ENCODE measurements at regions of chr20 and their contacts with region 1.

Region 1: DNA sequence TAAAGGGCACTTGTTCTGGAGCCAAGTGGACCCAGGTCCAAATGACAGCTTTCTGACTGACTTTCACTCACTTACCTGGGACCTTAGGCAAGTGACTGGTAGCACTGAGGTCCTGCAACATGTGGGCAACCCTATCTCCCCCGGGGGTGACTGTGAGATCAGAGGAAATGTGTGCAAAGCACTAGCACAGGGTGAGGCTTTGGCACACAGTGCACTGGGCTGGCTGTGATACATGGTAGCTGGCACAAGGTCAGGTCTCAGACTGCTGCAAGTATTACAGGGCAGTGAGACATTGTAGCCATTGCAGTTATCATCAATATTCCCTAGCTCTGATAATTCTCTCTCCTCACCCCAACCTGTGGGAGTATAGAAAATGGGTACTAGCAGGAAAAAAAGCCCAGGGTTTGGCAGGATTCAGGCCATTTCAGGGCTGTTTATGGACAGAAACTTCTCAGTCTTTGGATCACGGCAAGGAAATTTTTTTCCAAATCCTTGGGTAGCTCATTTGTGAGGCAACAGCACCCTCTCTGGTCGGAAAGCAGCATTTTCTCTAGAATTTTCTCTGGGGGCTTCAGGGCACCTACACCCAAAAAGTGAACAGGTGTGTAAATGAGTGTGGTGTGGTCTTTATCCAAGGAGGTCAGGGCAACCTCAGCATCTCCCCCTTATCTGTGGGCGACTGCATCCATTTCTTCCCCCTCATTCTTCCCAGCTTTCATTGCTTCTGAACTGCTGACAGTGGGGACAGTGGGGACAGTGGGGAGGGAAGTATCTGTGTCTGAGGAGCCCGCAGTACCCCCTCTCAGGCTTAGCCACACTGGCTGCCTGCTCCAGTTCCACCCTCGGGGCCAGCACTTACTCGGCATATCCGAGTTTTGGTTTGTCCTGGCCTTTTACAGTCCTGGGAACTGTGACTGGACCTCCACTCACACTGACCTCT is 148.7 kb upstream of the PHACTR3 start:
- DNase-seq: peak; percentile 34
- H3K4me3 Mint-ChIP-seq: no peak overlapping the region
- H3K27ac Mint-ChIP-seq: no peak overlapping the region
- H3K4me1 Mint-ChIP-seq: no peaks in the 10 kb centered on the region
- H3K27me3 Mint-ChIP-seq: peaks cover 61% of the 10 kb centered on the region
- CTCF ChIP-seq: peak; percentile 55

Region 2: GRCh38 chr20:58236612-58237330 is 1218.9 kb before region 1 on chr20:
- CTCF ChIA-PET with region 1: interaction called, 5 read pairs
- POLR2A ChIA-PET with region 1: no interaction called
- intact Hi-C with region 1: loop called (anchors 2 kb)
- DNase-seq: peak; percentile 71
- H3K4me3 Mint-ChIP-seq: peak overlapping the region; percentile 77
- H3K27ac Mint-ChIP-seq: no peak overlapping the region
- H3K4me1 Mint-ChIP-seq: no peaks in the 10 kb centered on the region
- H3K27me3 Mint-ChIP-seq: no peaks in the 10 kb centered on the region
- CTCF ChIP-seq: peak; percentile 96

Region 3: DNA sequence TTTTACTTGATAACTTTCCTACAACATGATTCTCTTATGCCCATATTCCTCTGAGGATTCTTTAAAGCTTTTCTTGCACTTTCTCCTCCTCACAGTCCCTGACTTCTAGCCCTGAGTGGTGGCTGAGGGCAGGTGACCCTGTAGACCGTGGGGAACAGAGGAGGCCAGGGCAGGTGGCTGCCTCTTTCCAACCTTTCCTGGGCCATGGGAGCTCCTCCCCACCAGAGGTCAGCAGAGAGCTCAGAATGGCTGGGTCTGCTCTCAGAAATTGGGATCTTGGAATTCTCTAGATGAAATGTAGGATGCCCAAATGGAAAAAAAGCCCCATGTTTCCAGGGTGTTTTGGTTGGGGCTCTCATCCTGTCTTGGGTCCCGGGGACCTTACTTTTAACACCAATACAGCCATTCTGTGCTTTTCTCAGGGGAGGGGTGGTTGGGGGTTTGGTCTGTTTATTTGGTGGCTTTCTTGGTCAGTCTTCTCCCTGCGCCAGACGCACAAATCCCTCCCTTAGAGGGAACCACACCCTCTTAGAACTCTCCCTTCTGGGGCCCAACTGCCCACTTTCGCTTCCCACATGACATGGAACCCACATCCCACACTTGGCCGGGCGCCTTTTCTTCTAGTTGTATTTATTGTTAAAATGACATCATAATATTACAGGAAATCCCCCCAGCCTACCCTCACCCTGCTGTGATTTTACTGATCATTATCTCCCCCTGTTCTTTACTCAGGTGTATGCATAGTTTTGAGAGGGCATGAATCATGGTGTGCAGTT is 585.2 kb before region 1 on chr20:
- CTCF ChIA-PET with region 1: interaction called, 50 read pairs
- POLR2A ChIA-PET with region 1: interaction called, 5 read pairs
- intact Hi-C with region 1: no loop called
- DNase-seq: peak; percentile 75
- H3K4me3 Mint-ChIP-seq: no peak overlapping the region
- H3K27ac Mint-ChIP-seq: no peak overlapping the region
- H3K4me1 Mint-ChIP-seq: peaks cover 1% of the 10 kb centered on the region
- H3K27me3 Mint-ChIP-seq: peaks cover 26% of the 10 kb centered on the region
- CTCF ChIP-seq: peak; percentile 87

Region 4: DNA sequence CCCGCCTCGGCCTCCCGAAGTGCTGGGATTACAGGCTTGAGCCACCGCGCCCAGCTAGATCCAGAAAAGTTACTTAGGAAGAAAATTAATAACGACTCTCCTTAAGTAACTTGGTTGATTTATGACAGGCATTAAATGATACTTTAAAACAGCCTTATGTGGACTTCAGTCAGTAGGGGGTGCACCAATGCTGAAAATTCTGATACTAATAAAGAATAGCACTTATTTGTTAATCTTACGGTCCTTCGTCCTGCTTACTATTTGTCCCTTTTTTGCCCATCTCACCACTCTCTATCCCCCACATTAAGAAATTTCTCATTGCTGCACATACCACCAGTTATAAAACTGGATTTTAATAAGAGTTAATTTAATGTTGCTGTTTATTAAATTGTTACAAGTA is 400.4 kb before region 1 on chr20:
- CTCF ChIA-PET with region 1: interaction called, 15 read pairs
- POLR2A ChIA-PET with region 1: no interaction called
- intact Hi-C with region 1: no loop called
- DNase-seq: peak; percentile 39
- H3K4me3 Mint-ChIP-seq: no peak overlapping the region
- H3K27ac Mint-ChIP-seq: no peak overlapping the region
- H3K4me1 Mint-ChIP-seq: no peaks in the 10 kb centered on the region
- H3K27me3 Mint-ChIP-seq: peaks cover 32% of the 10 kb centered on the region
- CTCF ChIP-seq: peak; percentile 53

Region 5: GRCh38 chr20:59421086-59421485 is 34.6 kb before region 1 on chr20:
- CTCF ChIA-PET with region 1: interaction called, 10 read pairs
- POLR2A ChIA-PET with region 1: no interaction called
- intact Hi-C with region 1: no loop called
- DNase-seq: no peak
- H3K4me3 Mint-ChIP-seq: no peak overlapping the region
- H3K27ac Mint-ChIP-seq: no peak overlapping the region
- H3K4me1 Mint-ChIP-seq: no peaks in the 10 kb centered on the region
- H3K27me3 Mint-ChIP-seq: peaks cover 61% of the 10 kb centered on the region
- CTCF ChIP-seq: no peak

Region 6: DNA sequence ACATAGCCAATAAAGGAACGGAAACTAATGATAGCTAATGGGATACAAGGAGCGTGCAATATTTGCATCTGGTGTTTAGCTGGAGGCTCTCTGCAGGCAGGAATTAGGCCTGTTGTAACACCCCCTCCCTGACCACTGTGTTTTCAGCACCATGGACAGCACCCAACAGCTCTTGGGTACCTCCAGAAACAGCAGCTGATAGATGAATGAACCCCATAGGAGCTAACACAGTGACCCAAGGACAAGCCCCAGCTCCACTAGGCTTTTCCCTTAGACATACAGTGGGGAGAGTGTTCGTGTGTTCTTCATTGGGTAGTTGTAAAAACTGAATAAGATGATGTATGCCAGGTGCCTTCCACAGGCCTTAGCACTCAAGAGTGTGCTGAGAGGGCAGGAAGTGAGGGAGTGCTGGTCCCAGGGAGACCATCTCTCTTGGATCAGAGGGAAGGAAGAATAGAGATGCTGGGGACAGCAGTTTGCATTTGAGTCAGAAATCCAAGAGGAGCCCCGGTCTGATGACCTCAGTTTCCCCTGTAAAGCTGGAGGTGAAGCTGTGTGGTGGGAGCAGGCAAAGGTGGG is 310.0 kb after region 1 on chr20:
- CTCF ChIA-PET with region 1: no interaction called
- POLR2A ChIA-PET with region 1: no interaction called
- intact Hi-C with region 1: no loop called
- DNase-seq: peak; percentile 52
- H3K4me3 Mint-ChIP-seq: no peak overlapping the region
- H3K27ac Mint-ChIP-seq: no peak overlapping the region
- H3K4me1 Mint-ChIP-seq: no peaks in the 10 kb centered on the region
- H3K27me3 Mint-ChIP-seq: peaks cover 47% of the 10 kb centered on the region
- CTCF ChIP-seq: no peak

Measured in MCF 10A (cell line).